ENCODE measurements at regions of chr1 and their contacts with region 1.

Region 1: DNA sequence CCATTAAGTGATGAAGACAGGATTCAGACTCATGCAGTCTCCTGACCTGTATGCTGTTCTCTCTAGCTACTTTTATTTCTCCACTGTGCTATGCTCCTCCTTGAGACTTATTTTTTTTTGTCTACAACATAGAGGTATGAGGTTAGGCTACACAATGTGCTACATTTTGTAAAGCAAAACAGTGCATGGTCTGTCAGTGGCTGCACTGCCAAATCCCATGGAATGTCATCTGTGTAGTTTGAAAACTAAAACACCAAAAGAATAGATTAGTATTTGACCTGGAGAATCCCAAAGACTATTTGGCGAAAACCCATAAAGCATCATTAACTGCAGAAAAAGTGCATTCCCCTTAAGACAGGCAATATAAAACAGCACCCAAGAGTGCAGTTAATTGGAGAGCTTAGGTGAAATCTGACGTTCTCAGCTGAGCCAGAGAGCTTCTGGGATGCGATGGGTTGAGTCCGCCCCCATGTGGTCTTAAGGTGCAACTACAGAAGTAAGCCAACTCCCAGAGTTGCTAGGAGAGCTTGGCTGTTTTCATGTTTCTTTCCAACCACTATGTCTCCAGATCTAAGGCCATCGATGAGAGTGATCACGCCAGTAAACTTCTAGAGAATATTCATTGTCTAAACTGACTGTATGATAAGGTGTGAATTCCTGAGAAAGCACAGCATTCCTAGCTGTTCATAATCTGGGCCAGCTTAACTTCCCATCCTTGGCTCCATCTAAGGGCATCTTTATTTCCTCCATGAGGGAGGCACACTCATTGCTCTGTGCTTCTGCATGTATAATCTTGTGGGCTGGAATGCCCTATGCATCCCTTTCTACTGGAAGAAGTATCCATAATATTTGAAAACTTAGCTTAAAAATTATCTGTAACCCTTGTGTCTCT is 20.7 kb upstream of the CYP2J2 start:
- DNase-seq: no peak
- ATAC-seq: peak; percentile 85
- H3K4me3 ChIP-seq: no peak overlapping the region
- H3K27ac ChIP-seq: no peak overlapping the region
- H3K4me1 ChIP-seq: no peaks in the 10 kb centered on the region
- H3K27me3 ChIP-seq: no peaks in the 10 kb centered on the region

Region 2: GRCh38 chr1:59880735-59881134 is 66.6 kb before region 1 on chr1:
- intact Hi-C with region 1: loop called in 1 of 2 experiments (anchors 2 kb)
- DNase-seq: no peak
- ATAC-seq: no peak
- H3K4me3 ChIP-seq: no peak overlapping the region
- H3K27ac ChIP-seq: no peak overlapping the region
- H3K4me1 ChIP-seq: no peaks in the 10 kb centered on the region
- H3K27me3 ChIP-seq: no peaks in the 10 kb centered on the region

Region 3: GRCh38 chr1:59903141-59903754 is 44.0 kb before region 1 on chr1:
- intact Hi-C with region 1: loop called in 1 of 2 experiments (anchors 5 kb)
- DNase-seq: no peak
- ATAC-seq: no peak
- H3K4me3 ChIP-seq: no peak overlapping the region
- H3K27ac ChIP-seq: no peak overlapping the region
- H3K4me1 ChIP-seq: no peaks in the 10 kb centered on the region
- H3K27me3 ChIP-seq: no peaks in the 10 kb centered on the region

Region 4: GRCh38 chr1:60639287-60639686 is 692.0 kb after region 1 on chr1:
- intact Hi-C with region 1: no loop called
- DNase-seq: no peak
- ATAC-seq: no peak
- H3K4me3 ChIP-seq: no peak overlapping the region
- H3K27ac ChIP-seq: no peak overlapping the region
- H3K4me1 ChIP-seq: no peaks in the 10 kb centered on the region
- H3K27me3 ChIP-seq: no peaks in the 10 kb centered on the region